ENCODE measurements at regions of chr12 and their contacts with region 1.

Region 1: GRCh38 chr12:82685790-82686167 is 927 bp upstream of the TMTC2 start:
- DNase-seq: peak; percentile 97
- H3K4me3 Mint-ChIP-seq: peak overlapping the region; percentile 89
- H3K27ac Mint-ChIP-seq: peak overlapping the region; percentile 97
- H3K4me1 Mint-ChIP-seq: peaks cover 51% of the 10 kb centered on the region
- H3K27me3 Mint-ChIP-seq: no peaks in the 10 kb centered on the region
- CTCF ChIP-seq: peak; percentile 82

Region 2: DNA sequence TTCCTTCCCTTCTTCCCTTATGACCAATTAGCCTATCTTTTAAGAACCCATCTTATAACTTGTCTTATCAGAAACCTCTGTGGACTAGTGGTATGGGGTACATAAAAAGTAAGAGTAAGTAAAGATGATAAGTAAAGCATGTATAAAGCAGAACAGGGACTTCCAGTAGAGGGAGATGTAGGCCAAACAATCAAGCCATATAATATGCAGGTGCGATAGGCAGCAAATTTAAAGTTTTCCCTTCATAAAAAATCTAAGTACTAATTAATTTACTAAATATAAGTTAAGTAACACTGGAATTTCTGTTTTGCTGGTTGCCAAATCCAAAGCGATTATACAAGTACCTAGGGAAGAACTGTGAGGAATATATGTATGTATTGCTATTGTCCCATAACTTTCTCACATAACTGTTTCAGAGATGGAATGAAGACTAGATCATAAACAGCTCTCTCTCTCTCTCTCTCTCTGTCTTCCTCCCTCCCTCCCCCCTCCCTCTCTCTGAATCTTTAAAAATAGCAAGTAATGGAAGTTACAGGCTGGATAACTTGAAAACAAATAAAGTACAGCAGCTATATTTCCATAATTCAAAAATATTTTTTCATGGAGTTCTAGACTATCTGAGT is 301.7 kb before region 1 on chr12:
- CTCF ChIA-PET with region 1: interaction called, 9 read pairs
- intact Hi-C with region 1: loop called (anchors 10 kb)
- DNase-seq: peak; percentile 20
- H3K4me3 Mint-ChIP-seq: no peak overlapping the region
- H3K27ac Mint-ChIP-seq: no peak overlapping the region
- H3K4me1 Mint-ChIP-seq: no peaks in the 10 kb centered on the region
- H3K27me3 Mint-ChIP-seq: no peaks in the 10 kb centered on the region
- CTCF ChIP-seq: no peak

Region 3: GRCh38 chr12:82638324-82638723 is 47.5 kb before region 1 on chr12:
- CTCF ChIA-PET with region 1: interaction called, 35 read pairs
- intact Hi-C with region 1: loop called (anchors 1 kb)
- DNase-seq: no peak
- H3K4me3 Mint-ChIP-seq: no peak overlapping the region
- H3K27ac Mint-ChIP-seq: peak overlapping the region; percentile 5
- H3K4me1 Mint-ChIP-seq: peaks cover 23% of the 10 kb centered on the region
- H3K27me3 Mint-ChIP-seq: no peaks in the 10 kb centered on the region
- CTCF ChIP-seq: no peak

Region 4: DNA sequence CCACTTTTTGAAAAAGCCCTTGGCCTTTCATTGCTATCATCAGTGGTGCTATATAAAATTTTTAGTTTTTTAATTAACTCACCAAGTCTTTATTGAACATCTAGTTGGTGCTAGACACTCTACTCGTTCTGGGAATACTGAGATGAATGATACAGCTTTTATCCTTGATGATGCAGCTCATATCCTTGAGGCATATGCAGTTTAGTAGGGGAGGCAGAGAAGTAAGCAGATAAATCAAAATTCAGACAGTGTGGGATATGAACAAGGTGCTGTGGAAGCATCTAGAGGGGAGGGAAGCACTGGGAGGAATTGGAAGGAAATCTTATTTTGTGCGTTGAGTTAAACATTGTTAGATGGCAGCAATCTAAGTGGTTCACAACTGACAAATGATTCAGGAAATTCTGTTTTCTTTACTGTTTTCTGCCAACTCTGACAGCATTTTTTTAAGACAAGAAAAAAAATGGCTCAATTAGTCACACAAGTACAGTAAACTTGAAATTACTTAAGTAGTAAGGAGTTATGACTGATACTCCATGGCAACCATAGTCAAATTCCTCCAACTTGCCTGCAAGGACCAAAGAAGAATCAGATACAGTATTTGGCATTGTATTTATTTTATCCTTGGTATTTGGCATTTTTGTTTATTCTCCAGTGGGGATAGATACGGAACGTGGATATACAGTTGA is 120.2 kb after region 1 on chr12:
- CTCF ChIA-PET with region 1: no interaction called
- intact Hi-C with region 1: loop called (anchors 5 kb)
- DNase-seq: no peak
- H3K4me3 Mint-ChIP-seq: no peak overlapping the region
- H3K27ac Mint-ChIP-seq: no peak overlapping the region
- H3K4me1 Mint-ChIP-seq: peaks cover 31% of the 10 kb centered on the region
- H3K27me3 Mint-ChIP-seq: no peaks in the 10 kb centered on the region
- CTCF ChIP-seq: no peak

Region 5: GRCh38 chr12:82937151-82937550 is 251.4 kb after region 1 on chr12:
- CTCF ChIA-PET with region 1: no interaction called
- intact Hi-C with region 1: no loop called
- DNase-seq: no peak
- H3K4me3 Mint-ChIP-seq: no peak overlapping the region
- H3K27ac Mint-ChIP-seq: no peak overlapping the region
- H3K4me1 Mint-ChIP-seq: no peaks in the 10 kb centered on the region
- H3K27me3 Mint-ChIP-seq: no peaks in the 10 kb centered on the region
- CTCF ChIP-seq: no peak

Region 6: GRCh38 chr12:83261998-83262397 is 576.2 kb after region 1 on chr12:
- CTCF ChIA-PET with region 1: no interaction called
- intact Hi-C with region 1: loop called (anchors 10 kb)
- DNase-seq: no peak
- H3K4me3 Mint-ChIP-seq: no peak overlapping the region
- H3K27ac Mint-ChIP-seq: no peak overlapping the region
- H3K4me1 Mint-ChIP-seq: no peaks in the 10 kb centered on the region
- H3K27me3 Mint-ChIP-seq: no peaks in the 10 kb centered on the region
- CTCF ChIP-seq: no peak

Region 7: DNA sequence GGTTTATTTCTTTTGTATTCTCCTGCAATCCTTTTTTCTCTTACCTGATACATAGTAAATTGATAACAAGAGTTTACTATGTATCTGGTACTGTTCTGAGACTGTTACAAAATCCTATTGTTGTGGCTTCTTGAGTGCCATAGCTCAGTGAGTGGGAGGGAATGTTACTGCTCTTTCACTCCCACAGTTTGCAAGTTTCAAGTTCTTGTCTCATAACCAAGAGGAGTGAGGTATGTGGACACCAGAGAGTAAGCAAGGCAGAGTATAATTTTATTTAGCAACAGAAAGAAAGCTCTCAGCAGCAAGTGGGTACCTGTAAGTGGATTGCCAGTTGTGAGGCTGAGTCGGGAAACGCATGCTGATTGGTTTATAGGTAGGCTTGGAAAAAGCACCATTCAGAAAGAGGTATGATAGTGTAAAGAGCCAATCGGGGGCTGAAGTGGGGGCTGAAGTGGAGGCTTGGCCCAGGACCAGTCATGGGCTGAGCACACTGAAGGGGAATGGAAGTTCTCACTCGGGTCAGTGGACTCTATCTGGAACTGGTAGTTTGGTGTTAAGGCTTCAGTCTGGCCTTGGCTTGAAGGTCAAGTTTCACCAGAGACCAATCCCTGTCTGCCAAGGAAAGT is 851.8 kb after region 1 on chr12:
- CTCF ChIA-PET with region 1: no interaction called
- intact Hi-C with region 1: loop called (anchors 10 kb)
- DNase-seq: no peak
- H3K4me3 Mint-ChIP-seq: no peak overlapping the region
- H3K27ac Mint-ChIP-seq: no peak overlapping the region
- H3K4me1 Mint-ChIP-seq: no peaks in the 10 kb centered on the region
- H3K27me3 Mint-ChIP-seq: no peaks in the 10 kb centered on the region
- CTCF ChIP-seq: no peak

Region 8: DNA sequence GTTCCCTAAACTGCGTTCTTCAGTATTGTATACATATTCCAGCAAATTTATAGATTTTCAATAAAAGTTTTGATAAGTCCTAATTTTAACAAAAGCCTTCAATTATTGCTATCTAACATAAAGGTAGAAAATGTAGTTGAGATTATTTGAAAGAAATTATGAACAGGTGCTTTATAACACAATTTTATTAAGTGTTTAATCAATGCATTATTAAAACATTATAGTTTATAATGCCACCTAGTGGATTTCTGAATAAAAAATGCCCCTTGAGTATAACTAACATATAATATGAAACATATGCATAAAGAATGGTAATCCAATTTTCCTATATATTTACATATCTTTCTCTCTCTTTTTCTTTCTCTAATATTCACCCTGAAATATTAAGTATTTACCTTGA is 1711.5 kb after region 1 on chr12:
- CTCF ChIA-PET with region 1: no interaction called
- intact Hi-C with region 1: loop called (anchors 5 kb)
- DNase-seq: no peak
- H3K4me3 Mint-ChIP-seq: no peak overlapping the region
- H3K27ac Mint-ChIP-seq: no peak overlapping the region
- H3K4me1 Mint-ChIP-seq: no peaks in the 10 kb centered on the region
- H3K27me3 Mint-ChIP-seq: no peaks in the 10 kb centered on the region
- CTCF ChIP-seq: peak; percentile 22

Measured in Calu3 (cell line).